Gastrocnemius medialis (tissue), 4 donors: ENCODE measurements at regions of chr7 and their contacts with region 1.

Region 1: DNA sequence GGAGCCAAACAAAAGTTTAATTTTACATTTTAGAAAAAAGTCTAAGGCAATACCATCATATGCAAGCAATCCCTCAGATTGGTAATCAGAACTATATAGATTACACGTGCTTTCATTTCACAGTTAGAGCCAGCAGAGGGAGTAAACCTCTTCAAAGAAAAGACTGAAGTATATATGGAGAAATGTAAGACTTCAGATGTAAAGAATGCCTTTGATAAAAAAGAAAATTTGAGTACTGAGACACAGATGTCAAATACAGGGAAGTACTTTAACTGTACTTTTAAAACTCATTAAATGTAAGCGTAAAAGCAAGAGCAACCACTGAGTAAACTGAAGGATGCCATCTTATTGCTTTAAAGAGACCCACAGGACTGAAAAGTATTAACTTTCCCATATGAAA is 101.4 kb upstream of the FAM133B start:
- DNase-seq: no peak
- ATAC-seq: no peak
- H3K4me3 ChIP-seq: no peak overlapping the region
- H3K27ac ChIP-seq: no peak overlapping the region
- H3K4me1 ChIP-seq: peaks cover 4 to 5% of the 10 kb centered on the region in 2 donors
- H3K27me3 ChIP-seq: no peaks in the 10 kb centered on the region
- CTCF ChIP-seq: peak in 3 of 5 experiments; percentile 11 to 35 (median 16)
- POLR2A ChIP-seq: no peak

Region 2: DNA sequence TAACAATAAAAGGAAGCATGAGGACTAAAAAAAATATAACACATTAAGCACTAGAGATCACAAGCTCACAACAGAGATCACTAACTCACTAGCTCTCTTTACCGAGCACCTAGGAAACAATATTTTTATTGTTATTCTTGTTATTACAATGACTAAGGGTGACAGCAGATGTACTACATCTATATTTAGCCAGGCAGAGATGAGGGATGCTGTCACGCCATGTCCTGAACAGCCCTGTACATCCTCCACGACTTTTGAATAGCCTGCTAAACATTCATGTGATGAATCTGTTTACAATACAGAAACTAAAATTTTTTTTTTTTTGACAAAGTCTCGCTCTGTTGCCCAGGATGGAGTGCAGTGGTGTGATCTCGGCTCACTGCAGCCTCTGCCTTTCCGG is 124.1 kb before region 1 on chr7:
- in situ Hi-C with region 1: no loop called
- intact Hi-C with region 1: no loop called
- DNase-seq: no peak
- ATAC-seq: no peak
- H3K4me3 ChIP-seq: no peak overlapping the region
- H3K27ac ChIP-seq: no peak overlapping the region
- H3K4me1 ChIP-seq: no peaks in the 10 kb centered on the region
- H3K27me3 ChIP-seq: no peaks in the 10 kb centered on the region
- CTCF ChIP-seq: no peak
- POLR2A ChIP-seq: no peak

Region 3: DNA sequence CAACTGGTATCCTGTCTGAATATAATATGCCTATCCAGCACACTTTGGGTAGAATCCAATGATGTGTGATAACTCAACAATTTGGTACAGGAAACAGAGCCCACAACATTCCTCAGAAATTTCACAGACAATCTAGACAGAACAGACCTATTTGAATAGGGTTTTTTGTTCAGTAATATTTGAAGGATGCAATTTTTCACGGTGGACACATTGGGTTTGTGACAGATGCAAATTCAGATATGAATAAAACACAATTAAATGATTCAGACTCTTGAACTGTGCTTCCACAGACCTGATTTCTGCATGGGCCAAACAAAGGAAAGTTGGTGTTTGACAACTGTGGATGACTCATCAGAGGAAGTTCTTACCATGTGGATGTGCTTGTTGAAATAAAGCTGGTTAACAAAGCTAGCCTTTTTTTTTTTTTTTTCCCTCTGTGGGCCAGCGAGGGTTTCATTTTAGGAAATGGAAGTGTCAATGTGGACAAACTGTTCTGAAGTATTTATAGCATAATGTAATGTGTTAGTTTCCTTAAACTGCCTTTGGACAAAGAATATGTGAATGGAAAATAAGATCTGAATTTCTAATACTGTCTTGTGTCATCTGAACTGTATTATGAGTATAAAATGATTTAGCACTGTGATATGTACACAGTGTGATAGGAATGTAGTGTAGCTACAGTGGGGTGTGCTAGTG is 58.2 kb before region 1 on chr7:
- in situ Hi-C with region 1: no loop called
- intact Hi-C with region 1: loop called (anchors 5 kb)
- DNase-seq: peak in 1 of 2 donors; percentile 20
- ATAC-seq: peak; percentile 88 to 95
- H3K4me3 ChIP-seq: no peak overlapping the region
- H3K27ac ChIP-seq: peak overlapping the region; percentile 61 to 77 (median 72)
- H3K4me1 ChIP-seq: peaks cover 25 to 27% of the 10 kb centered on the region in 2 donors
- H3K27me3 ChIP-seq: no peaks in the 10 kb centered on the region
- CTCF ChIP-seq: no peak
- POLR2A ChIP-seq: no peak

Region 4: GRCh38 chr7:92833024-92833765 is 141.6 kb after region 1 on chr7:
- in situ Hi-C with region 1: no loop called
- intact Hi-C with region 1: loop called (anchors 2 kb)
- DNase-seq: peak; percentile 35 to 46
- ATAC-seq: peak; percentile 51 to 61
- H3K4me3 ChIP-seq: peak overlapping the region; percentile 50 to 81 (median 70)
- H3K27ac ChIP-seq: peak overlapping the region; percentile 74 to 80 (median 76)
- H3K4me1 ChIP-seq: no peaks in the 10 kb centered on the region
- H3K27me3 ChIP-seq: peaks cover 11 to 56% (median 51%) of the 10 kb centered on the region in 3 donors
- CTCF ChIP-seq: peak; percentile 33 to 76 (median 62)
- POLR2A ChIP-seq: peak in 1 of 2 donors; percentile 20